ENCODE measurements at regions of chr1 and their contacts with region 1.

Region 1: GRCh38 chr1:212035123-212035834 is at the starts of genes DTL and INTS7:
- DNase-seq: peak; percentile 99
- H3K4me3 Mint-ChIP-seq: peak within 1 kb of the TSS; percentile 95
- H3K27ac Mint-ChIP-seq: peak within 1 kb of the TSS; percentile 94
- H3K4me1 Mint-ChIP-seq: peaks cover 74% of the 10 kb centered on the region
- H3K27me3 Mint-ChIP-seq: peaks cover 3% of the 10 kb centered on the region
- total RNA-seq, gene DTL: 91.0 and 94.8 TPM in 2 replicates
- total RNA-seq, gene INTS7: 33.2 and 33.8 TPM in 2 replicates

Region 2: GRCh38 chr1:211578640-211579433 is 456.4 kb before region 1 on chr1 and contains the start of gene SLC30A1:
- intact Hi-C with region 1: loop called (anchors 1 kb)
- DNase-seq: peak; percentile 99
- H3K4me3 Mint-ChIP-seq: peak within 1 kb of the TSS; percentile 94
- H3K27ac Mint-ChIP-seq: peak within 1 kb of the TSS; percentile 88
- H3K4me1 Mint-ChIP-seq: peaks cover 42% of the 10 kb centered on the region
- H3K27me3 Mint-ChIP-seq: peaks cover under 1% of the 10 kb centered on the region
- total RNA-seq, gene SLC30A1: 10.6 and 12.0 TPM in 2 replicates

Region 3: DNA sequence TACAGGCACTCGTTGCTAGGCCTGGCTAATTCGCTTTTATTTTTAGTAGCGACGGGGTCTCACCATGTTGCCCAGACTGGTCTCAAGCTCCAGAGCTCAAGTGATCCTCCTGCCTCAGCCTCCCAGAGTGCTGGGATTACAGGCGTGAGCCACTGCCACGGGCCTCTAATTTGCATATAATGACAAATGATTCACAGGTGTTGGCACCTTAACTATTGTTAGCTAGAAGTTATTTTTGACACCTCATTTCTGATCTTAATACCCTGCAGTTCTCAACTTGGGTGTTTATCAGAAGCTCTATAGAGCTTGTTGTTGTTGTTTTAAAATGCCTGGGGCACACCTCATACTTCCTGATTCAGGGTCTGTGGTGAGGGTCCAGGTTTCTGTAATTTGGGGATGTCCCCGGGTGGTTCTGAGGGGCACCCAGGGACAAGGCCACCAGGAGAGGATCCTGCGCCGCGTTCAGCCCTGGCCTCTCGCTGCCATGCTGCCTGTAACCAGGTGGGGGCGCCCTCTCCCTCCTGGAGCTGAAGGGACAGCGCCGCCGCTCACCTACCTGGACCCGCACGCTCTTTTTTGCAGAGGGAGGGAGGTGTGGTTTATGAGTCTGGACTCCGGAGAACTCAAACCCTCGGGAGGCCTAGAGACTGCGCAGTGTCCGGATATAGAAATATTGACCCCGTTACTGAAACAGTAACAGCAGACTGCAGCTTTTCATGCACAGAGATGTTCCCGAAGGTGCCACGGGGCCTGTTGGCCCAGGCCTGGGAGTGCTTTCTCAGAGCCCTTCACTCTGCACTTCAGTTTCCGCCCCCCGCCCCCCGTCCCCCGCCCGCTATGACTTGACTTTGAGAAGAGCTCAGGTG is 336.9 kb before region 1 on chr1:
- intact Hi-C with region 1: loop called (anchors 1 kb)
- DNase-seq: peak; percentile 75
- H3K4me3 Mint-ChIP-seq: peak overlapping the region; percentile 41
- H3K27ac Mint-ChIP-seq: no peak overlapping the region
- H3K4me1 Mint-ChIP-seq: peaks cover 36% of the 10 kb centered on the region
- H3K27me3 Mint-ChIP-seq: peaks cover 15% of the 10 kb centered on the region

Region 4: GRCh38 chr1:212012034-212012740 is 23.1 kb before region 1 on chr1:
- intact Hi-C with region 1: loop called (anchors 1 kb)
- DNase-seq: peak; percentile 45
- H3K4me3 Mint-ChIP-seq: no peak overlapping the region
- H3K27ac Mint-ChIP-seq: no peak overlapping the region
- H3K4me1 Mint-ChIP-seq: peaks cover 5% of the 10 kb centered on the region
- H3K27me3 Mint-ChIP-seq: no peaks in the 10 kb centered on the region

Region 5: GRCh38 chr1:212124690-212125582 is 89.7 kb after region 1 on chr1:
- intact Hi-C with region 1: no loop called
- DNase-seq: no peak
- H3K4me3 Mint-ChIP-seq: no peak overlapping the region
- H3K27ac Mint-ChIP-seq: no peak overlapping the region
- H3K4me1 Mint-ChIP-seq: peaks cover 28% of the 10 kb centered on the region
- H3K27me3 Mint-ChIP-seq: no peaks in the 10 kb centered on the region

Region 6: GRCh38 chr1:212432706-212433576 is 397.7 kb after region 1 on chr1 and contains the start of gene NENF:
- intact Hi-C with region 1: loop called (anchors 2 kb)
- DNase-seq: peak; percentile 74
- H3K4me3 Mint-ChIP-seq: peak within 1 kb of the TSS; percentile 77
- H3K27ac Mint-ChIP-seq: peak within 1 kb of the TSS; percentile 53
- H3K4me1 Mint-ChIP-seq: peaks cover 32% of the 10 kb centered on the region
- H3K27me3 Mint-ChIP-seq: peaks cover 6% of the 10 kb centered on the region
- total RNA-seq, gene NENF: 29.7 and 32.5 TPM in 2 replicates

Region 7: DNA sequence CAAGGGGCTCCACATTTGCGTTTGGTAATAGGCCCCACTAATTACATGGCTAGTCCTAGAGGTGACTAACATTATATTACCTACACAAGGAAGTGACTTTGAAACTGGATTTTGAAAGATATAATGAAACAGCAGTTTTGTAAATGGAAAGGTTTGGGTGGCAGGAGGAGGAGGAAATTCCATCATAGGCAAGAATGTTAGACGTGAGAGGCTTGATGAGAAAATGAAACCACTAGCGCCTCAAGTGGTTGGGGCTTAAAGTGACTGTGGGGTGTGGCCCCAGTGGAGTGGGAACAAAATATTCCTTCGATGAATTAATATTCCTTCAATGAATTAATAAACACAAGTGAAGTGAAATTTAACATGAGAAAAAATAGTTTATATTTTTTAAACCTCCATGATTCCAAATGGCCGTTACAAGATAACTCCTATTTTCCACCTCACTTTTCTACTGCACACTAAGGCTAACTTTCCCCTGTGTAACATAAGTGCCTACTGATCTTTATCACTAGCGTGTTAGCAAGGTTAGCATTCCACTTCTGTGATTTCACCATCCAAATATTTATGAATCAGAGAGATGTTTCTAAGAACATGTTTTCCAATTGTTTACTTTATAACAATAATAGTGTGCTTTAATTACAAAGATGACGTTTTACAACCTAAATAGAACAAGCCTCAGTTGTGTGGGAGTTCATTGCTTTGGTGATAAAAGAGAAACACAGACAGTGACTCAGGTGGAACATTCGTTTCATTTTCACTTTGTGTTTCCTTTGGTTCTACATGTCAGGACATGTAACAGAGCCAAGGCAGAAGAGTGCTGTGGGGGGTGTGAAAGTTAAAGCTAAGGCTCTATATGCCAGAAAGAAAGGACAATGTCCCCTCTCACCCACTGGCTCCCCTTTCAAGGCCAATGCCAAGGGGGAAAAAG is 560.8 kb after region 1 on chr1:
- intact Hi-C with region 1: loop called (anchors 1 kb)
- DNase-seq: peak; percentile 64
- H3K4me3 Mint-ChIP-seq: peak overlapping the region; percentile 68
- H3K27ac Mint-ChIP-seq: peak overlapping the region; percentile 96
- H3K4me1 Mint-ChIP-seq: peaks cover 27% of the 10 kb centered on the region
- H3K27me3 Mint-ChIP-seq: peaks cover 10% of the 10 kb centered on the region

Measured in activated T-helper 1 cell treated with anti-CD3 and anti-CD28 coated beads, Interleukin-12 subunit alpha, Interleukin-12 subunit beta, Interleukin-2, Interleukin-4 antibody, amounts not matched to agents 30 ng/mL and 10 ng/mL and 1 ng/mL, durations not matched to agents 14 hours and 24 hours and 36 hours (primary cell).